H1 (cell line): ENCODE measurements at regions of chrX and their contacts with region 1.

Region 1: GRCh38 chrX:14528629-14529289 is 577 bp upstream of the GLRA2 start:
- DNase-seq: peak; percentile 17 to 81
- H3K4me3 ChIP-seq: peak overlapping the region; percentile 30 to 51 (median 42); a peak in 4 of 8 replicates
- H3K27ac ChIP-seq: no peak overlapping the region
- H3K4me1 ChIP-seq: no peaks in the 10 kb centered on the region; a peak in 1 of 7 replicates
- H3K27me3 ChIP-seq: no peaks in the 10 kb centered on the region
- CTCF ChIP-seq: peak in 2 of 3 experiments; percentile 55 to 56; a peak in 3 of 4 replicates
- EP300 ChIP-seq: no peak
- POLR2A ChIP-seq: no peak
- RAD21 ChIP-seq: peak; percentile 75 to 82

Region 2: DNA sequence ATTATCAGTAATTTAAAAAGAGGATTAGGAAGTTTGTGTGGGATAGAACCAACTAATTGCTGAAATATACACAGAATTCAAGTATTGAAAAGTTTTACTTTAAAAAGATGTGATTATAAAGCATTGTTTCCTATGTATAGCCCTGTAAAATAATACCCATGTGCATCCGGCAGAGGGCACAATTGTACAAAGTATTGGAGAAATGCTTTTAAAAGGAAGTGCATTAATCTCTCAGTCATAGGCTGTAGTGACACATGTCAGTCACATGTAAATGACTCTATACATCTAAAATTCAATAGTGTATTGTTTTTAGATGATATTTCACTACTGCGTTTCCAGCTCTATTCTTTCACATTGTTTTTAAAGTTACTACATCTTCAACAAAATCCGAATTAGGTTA is 489.4 kb before region 1 on chrX:
- CTCF ChIA-PET with region 1: interaction called, 10 read pairs
- POLR2A ChIA-PET with region 1: no interaction called
- DNase-seq: no peak
- H3K4me3 ChIP-seq: no peak overlapping the region
- H3K27ac ChIP-seq: no peak overlapping the region
- H3K4me1 ChIP-seq: no peaks in the 10 kb centered on the region
- H3K27me3 ChIP-seq: no peaks in the 10 kb centered on the region
- CTCF ChIP-seq: peak in 2 of 3 experiments; percentile 27 to 40; a peak in 2 of 4 replicates
- EP300 ChIP-seq: no peak
- POLR2A ChIP-seq: no peak
- RAD21 ChIP-seq: peak; percentile 72 to 77

Region 3: DNA sequence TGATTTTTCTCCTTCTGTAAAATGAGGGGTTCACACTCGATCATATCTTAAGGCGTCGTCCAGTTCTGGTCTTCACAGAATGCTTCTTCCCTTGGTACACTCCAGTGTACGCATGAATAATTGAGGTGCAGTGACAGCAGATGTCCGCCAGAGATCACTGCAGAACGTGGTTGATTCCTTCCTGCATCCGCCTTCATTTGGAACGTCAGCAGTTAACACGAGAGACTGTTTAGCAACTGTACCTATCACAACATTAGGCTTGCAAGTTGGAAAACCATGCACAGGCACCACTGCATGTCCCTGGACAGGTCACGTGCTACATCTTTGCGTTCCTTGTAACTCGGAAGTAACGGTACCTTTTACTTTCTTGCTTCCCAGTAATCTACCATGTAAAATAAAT is 433.1 kb before region 1 on chrX:
- CTCF ChIA-PET with region 1: interaction called, 16 read pairs
- POLR2A ChIA-PET with region 1: no interaction called
- DNase-seq: peak; percentile 7 to 48
- H3K4me3 ChIP-seq: no peak overlapping the region
- H3K27ac ChIP-seq: no peak overlapping the region
- H3K4me1 ChIP-seq: no peaks in the 10 kb centered on the region
- H3K27me3 ChIP-seq: no peaks in the 10 kb centered on the region
- CTCF ChIP-seq: peak; percentile 60 to 82 (median 63)
- EP300 ChIP-seq: no peak
- POLR2A ChIP-seq: no peak
- RAD21 ChIP-seq: peak; percentile 92